ENCODE measurements at regions of chr17 and their contacts with region 1.

Region 1: GRCh38 chr17:81484195-81484979 is 28.2 kb downstream of the ACTG1 start:
- DNase-seq: peak; percentile 90 to 91
- ATAC-seq: peak; percentile 74 to 92 (median 81)
- H3K4me3 ChIP-seq: peak overlapping the region; percentile 17
- H3K4me3 Mint-ChIP-seq: peak overlapping the region; percentile 17
- H3K27ac ChIP-seq: no peak overlapping the region
- H3K27ac Mint-ChIP-seq: no peak overlapping the region
- H3K4me1 ChIP-seq: peaks cover 52% of the 10 kb centered on the region
- H3K4me1 Mint-ChIP-seq: peaks cover 12 to 20% of the 10 kb centered on the region in 2 donors
- H3K27me3 ChIP-seq: peaks cover 30% of the 10 kb centered on the region
- H3K27me3 Mint-ChIP-seq: peaks cover 22 to 24% of the 10 kb centered on the region in 2 donors
- CTCF ChIP-seq: peak; percentile 97

Region 2: DNA sequence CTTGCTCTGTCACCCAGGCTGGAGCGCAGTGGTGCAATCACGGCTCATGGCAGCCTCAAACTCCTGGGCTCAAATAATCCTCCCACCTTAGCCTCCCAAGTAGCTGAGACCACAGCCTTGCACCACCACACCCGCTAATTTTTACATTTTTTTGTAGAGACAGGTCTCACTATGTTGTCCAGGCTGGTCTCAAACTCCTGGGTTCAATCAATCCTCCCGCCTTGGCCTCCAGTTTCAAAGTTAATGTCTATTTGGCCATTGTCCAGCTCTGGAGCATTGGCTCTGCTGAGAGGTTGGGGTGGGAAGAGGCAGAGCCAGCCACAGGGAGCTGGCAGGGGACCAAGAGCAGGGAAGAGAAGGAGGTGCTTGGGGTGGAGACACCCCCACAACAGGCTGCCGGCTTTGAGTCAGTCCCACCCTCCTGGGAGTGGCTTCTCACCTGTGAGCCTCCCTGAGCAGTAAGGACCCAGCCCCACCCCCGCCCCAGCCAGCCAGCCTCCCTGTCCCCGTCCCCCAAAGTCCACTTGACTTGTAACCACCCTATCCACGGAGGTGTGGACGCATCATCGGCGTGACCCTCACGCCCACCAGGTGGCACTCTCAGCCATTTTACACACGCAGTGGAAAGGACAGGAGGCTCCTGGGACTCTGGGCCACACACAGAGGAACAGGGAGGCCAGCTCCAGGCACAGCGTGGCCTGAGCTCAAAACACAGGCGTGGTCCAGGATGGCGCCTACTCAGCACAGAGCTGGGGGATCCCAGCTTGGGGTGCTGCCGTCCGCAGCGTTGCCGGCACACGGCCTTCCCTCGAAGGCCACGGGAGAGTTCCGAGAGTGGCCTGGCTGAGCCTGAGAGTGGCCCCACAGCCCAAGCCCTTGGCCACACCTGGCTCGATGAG is 341.8 kb before region 1 on chr17:
- intact Hi-C with region 1: loop called (anchors 5 kb)
- DNase-seq: peak; percentile 60 to 77
- ATAC-seq: peak; percentile 74 to 93 (median 87)
- H3K4me3 ChIP-seq: no peak overlapping the region
- H3K4me3 Mint-ChIP-seq: no peak overlapping the region
- H3K27ac ChIP-seq: no peak overlapping the region
- H3K27ac Mint-ChIP-seq: no peak overlapping the region
- H3K4me1 ChIP-seq: peaks cover 6% of the 10 kb centered on the region
- H3K4me1 Mint-ChIP-seq: peaks cover 0 to 14% of the 10 kb centered on the region in 2 donors
- H3K27me3 ChIP-seq: no peaks in the 10 kb centered on the region
- H3K27me3 Mint-ChIP-seq: no peaks in the 10 kb centered on the region
- CTCF ChIP-seq: peak; percentile 50

Region 3: GRCh38 chr17:81253358-81254131 is 230.8 kb before region 1 on chr17:
- intact Hi-C with region 1: loop called (anchors 1 kb)
- DNase-seq: peak; percentile 56 to 83
- ATAC-seq: peak; percentile 65 to 85 (median 78)
- H3K4me3 ChIP-seq: no peak overlapping the region
- H3K4me3 Mint-ChIP-seq: peak overlapping the region; percentile 66
- H3K27ac ChIP-seq: no peak overlapping the region
- H3K27ac Mint-ChIP-seq: peak overlapping the region; percentile 58 to 71
- H3K4me1 ChIP-seq: peaks cover 21% of the 10 kb centered on the region
- H3K4me1 Mint-ChIP-seq: peaks cover 25 to 28% of the 10 kb centered on the region in 2 donors
- H3K27me3 ChIP-seq: no peaks in the 10 kb centered on the region
- H3K27me3 Mint-ChIP-seq: no peaks in the 10 kb centered on the region
- CTCF ChIP-seq: peak; percentile 77

Region 4: DNA sequence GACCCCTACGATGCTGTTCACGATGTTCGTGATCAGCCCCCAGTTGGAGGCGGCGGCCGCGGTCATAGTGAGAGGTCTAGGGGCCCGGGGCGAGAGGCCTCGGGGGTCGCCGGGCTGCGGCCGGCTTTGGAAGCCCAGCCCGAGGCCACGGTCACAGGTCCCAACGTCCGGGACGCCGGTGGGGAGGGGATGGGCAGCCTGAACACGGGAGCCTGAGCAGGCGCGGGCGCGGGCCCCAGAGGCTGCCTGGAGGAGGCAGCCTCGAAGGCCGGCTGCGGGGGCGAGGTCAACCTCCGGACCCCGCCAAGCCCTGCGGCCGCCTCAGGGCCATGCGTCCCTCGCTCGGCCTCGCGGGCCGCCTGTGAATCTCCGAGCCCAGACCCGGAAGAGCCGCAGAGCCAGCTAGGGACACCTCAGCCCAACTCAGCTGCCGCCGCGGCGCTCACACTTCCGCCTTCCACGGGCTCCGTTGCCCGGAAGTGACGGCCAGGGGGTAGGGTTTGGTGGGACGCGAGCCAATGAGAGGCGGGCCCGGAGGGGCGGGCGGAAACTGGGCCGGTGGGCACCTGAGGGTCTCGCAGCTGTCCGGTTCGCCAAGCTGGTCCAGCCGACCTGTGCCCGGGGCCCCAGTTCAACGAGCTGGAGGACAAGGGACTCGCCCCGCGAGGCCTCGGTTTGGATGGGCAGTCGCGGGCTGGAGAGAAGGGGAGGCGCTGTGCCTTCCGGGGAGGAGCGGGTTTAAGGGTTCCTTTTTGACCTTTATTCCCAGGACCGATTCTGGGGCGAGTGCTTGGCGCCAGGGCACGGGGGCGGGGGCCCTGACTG is 189.3 kb before region 1 on chr17 and contains the start of gene SLC38A10:
- intact Hi-C with region 1: loop called (anchors 2 kb)
- DNase-seq: peak; percentile 90 to 93
- ATAC-seq: peak; percentile 93 to 96 (median 95)
- H3K4me3 ChIP-seq: peak within 1 kb of the TSS; percentile 61
- H3K4me3 Mint-ChIP-seq: peak within 1 kb of the TSS; percentile 98
- H3K27ac ChIP-seq: peak within 1 kb of the TSS; percentile 77
- H3K27ac Mint-ChIP-seq: peak within 1 kb of the TSS; percentile 96 to 100
- H3K4me1 ChIP-seq: peaks cover 37% of the 10 kb centered on the region
- H3K4me1 Mint-ChIP-seq: peaks cover 24 to 27% of the 10 kb centered on the region in 2 donors
- H3K27me3 ChIP-seq: no peaks in the 10 kb centered on the region
- H3K27me3 Mint-ChIP-seq: no peaks in the 10 kb centered on the region
- CTCF ChIP-seq: no peak
- total RNA-seq, gene SLC38A10: 72.2 to 104 (median 90.5) TPM

Region 5: DNA sequence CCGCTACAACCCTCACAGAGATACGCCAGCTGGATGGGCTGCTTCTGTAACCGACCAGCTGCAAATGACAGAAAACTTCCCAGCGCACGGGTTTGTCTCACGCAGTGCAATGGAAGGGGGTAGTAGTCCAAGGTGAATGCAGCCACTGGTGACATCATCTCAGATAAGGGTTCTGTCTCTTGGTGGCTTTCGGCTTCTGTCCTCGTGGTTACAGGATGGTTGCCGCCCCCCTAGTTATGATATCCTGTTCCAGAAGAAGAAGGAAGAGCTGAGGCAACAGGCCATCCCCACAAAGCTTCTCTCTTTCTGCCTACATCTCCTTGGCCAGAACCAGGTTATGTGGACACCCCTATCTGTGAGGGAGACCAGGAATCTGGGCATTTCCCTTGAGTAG is 129.4 kb before region 1 on chr17:
- intact Hi-C with region 1: no loop called
- DNase-seq: no peak
- ATAC-seq: no peak
- H3K4me3 ChIP-seq: no peak overlapping the region
- H3K4me3 Mint-ChIP-seq: no peak overlapping the region
- H3K27ac ChIP-seq: no peak overlapping the region
- H3K27ac Mint-ChIP-seq: no peak overlapping the region
- H3K4me1 ChIP-seq: peaks cover 27% of the 10 kb centered on the region
- H3K4me1 Mint-ChIP-seq: peaks cover 15 to 16% of the 10 kb centered on the region in 2 donors
- H3K27me3 ChIP-seq: peaks cover 6% of the 10 kb centered on the region
- H3K27me3 Mint-ChIP-seq: peaks cover 12 to 30% of the 10 kb centered on the region in 2 donors
- CTCF ChIP-seq: no peak

Region 6: DNA sequence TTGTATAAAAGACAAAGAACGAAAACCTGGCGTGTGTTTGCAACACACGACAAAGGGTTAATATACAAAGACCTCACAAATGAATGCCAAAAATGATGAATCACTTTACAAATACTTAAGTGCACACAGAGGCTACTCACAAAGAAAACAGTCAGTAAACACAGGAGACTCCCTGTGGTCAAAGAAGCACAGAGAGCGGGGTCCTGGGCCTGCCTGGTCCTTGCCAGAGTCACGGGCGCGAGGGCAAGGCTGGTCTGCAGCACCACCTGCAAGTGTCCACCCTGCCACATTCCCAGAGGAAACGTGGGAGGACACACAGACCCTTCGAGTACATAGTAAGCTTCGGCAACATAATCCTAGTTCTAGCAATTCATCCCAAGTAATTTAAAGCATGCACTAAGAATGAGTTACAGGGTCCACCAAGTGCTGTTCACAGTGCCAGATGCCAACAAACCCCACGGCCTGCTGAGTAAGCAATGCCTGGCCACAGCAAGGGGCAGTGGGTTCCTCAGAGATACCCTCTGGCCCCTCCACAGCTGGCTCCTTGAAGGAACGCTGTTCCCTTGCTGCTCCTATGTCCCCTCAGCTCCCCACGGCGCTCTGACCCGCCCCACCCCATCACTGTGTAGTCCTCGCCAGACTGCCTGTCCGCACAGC is 92.4 kb after region 1 on chr17:
- intact Hi-C with region 1: no loop called
- DNase-seq: no peak
- ATAC-seq: no peak
- H3K4me3 ChIP-seq: no peak overlapping the region
- H3K4me3 Mint-ChIP-seq: no peak overlapping the region
- H3K27ac ChIP-seq: no peak overlapping the region
- H3K27ac Mint-ChIP-seq: no peak overlapping the region
- H3K4me1 ChIP-seq: no peaks in the 10 kb centered on the region
- H3K4me1 Mint-ChIP-seq: peaks cover 18 to 36% of the 10 kb centered on the region in 2 donors
- H3K27me3 ChIP-seq: no peaks in the 10 kb centered on the region
- H3K27me3 Mint-ChIP-seq: no peaks in the 10 kb centered on the region
- CTCF ChIP-seq: no peak

Measured in natural killer cell (primary cell).